ENCODE measurements at regions of chr7 and their contacts with region 1.

Region 1: DNA sequence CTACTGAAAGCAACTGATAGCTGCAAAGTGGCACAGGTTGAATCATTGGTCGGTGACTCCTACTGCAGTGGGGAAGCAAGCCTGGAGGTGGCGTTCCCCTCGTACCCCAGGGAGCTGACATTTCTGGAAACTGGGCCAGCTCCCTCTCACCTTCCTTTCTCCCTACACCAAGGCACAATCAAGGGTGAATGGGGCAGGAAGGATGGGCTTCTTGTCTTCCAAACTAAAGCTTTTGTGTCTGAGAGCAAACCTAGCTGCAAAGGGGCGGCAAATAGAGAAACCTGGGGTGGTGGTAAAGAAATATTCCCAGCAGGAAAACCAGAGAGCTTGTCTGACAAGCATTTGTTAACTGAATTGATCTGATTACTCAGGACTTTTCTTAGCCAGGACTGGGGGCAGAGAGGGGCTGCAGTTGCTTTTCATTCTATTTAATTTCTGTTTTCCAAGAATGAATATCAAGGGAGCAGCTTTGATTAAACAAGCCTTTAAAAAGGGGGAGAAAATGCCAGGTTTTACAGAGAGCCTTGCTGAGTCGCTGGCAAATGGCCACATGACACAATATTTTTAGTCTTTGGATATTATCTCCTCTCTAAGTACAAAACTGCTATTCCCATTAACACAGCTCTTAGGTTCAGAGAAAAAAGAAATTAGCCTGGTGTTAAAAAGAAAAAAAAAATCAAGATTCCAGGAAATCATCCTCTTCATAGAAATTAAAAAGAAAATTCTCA is 27.8 kb downstream of the CDHR3 start:
- DNase-seq: no peak
- ATAC-seq: no peak
- H3K4me3 ChIP-seq: no peak overlapping the region
- H3K27ac ChIP-seq: no peak overlapping the region
- H3K4me1 ChIP-seq: no peaks in the 10 kb centered on the region
- H3K27me3 ChIP-seq: peaks cover 7% of the 10 kb centered on the region
- CTCF ChIP-seq: no peak

Region 2: DNA sequence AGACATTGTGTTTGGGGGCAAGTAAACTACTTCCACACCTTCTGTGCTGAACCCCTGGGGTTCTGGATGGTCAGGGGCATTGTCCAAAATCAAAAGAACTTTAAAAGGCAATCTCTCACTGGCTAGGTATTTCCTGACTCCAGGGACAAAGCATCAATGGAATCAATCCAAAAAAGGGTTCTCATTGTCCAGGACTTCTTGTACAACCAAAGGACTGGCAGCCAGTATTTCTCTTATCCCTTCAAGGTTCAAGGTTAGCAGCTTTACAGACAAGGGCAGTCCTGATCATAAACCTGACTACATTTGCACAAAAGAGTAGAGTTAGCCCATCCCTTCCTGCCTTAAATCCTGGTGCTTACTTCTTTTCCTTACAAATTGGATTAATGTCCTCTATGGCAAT is 626.1 kb before region 1 on chr7:
- CTCF ChIA-PET with region 1: no interaction called
- POLR2A ChIA-PET with region 1: no interaction called
- in situ Hi-C with region 1: no loop called
- intact Hi-C with region 1: no loop called
- DNase-seq: no peak
- ATAC-seq: no peak
- H3K4me3 ChIP-seq: no peak overlapping the region
- H3K27ac ChIP-seq: no peak overlapping the region
- H3K4me1 ChIP-seq: peaks cover 5% of the 10 kb centered on the region; the same call in 1 of the 2 replicates
- H3K27me3 ChIP-seq: no peaks in the 10 kb centered on the region
- CTCF ChIP-seq: no peak

Region 3: DNA sequence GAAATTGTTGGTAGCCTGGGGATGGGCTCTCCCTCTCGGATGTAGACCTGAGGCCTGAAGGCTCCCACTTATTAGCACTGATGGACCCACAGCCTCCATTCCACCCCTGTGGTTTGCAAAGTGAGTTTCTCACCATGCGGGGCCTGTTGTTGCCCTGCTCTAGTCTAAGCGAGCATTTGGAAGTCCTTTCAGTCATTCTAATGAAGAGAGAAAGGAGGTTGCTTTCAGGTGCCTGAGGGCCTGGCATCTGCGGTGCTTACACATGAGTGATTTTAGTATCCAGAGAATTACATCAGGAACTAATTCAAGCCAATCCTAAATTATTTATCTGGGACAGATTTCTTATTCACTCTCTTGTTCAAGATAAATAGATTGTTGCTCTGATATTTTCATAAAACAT is 232.3 kb after region 1 on chr7:
- CTCF ChIA-PET with region 1: no interaction called
- POLR2A ChIA-PET with region 1: interaction called, 16 read pairs
- in situ Hi-C with region 1: no loop called
- intact Hi-C with region 1: no loop called
- DNase-seq: no peak
- ATAC-seq: no peak
- H3K4me3 ChIP-seq: no peak overlapping the region
- H3K27ac ChIP-seq: no peak overlapping the region
- H3K4me1 ChIP-seq: no peaks in the 10 kb centered on the region; the same call in 1 of the 2 replicates
- H3K27me3 ChIP-seq: no peaks in the 10 kb centered on the region
- CTCF ChIP-seq: no peak

Measured in Panc1 (cell line).